ENCODE measurements at regions of chr14 and their contacts with region 1.

Region 1: DNA sequence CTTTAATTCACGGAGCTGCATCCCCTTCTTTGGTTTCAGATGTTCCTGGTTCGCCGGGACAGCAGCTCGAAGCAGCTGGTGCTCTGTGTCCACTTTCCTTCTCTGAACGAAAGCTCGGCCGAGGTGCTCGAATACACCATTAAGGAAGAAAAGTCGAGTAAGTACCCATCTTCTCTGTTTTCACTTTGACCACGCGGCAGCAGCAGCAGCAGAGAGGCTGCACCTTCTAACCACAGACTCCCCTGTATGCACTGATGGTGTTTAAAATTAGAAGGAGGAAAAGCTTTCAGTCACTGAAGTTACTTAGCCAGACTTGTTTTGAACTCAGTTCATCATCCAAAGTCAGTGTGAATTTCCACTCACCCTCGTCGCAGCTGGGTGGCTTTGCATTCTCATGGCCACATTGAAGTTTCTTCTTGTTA is 63.8 kb downstream of the RIN3 start:
- DNase-seq: peak; percentile 69
- ATAC-seq: peak; percentile 75
- H3K4me3 Mint-ChIP-seq: peak overlapping the region; percentile 66
- H3K27ac Mint-ChIP-seq: peak overlapping the region; percentile 85
- H3K4me1 Mint-ChIP-seq: peaks cover 79% of the 10 kb centered on the region
- H3K27me3 Mint-ChIP-seq: no peaks in the 10 kb centered on the region
- CTCF ChIP-seq: no peak

Region 2: GRCh38 chr14:92563359-92563758 is 14.0 kb before region 1 on chr14:
- CTCF ChIA-PET with region 1: interaction called, 13 read pairs
- POLR2A ChIA-PET with region 1: interaction called, 17 read pairs
- intact Hi-C with region 1: no loop called
- DNase-seq: peak; percentile 62
- ATAC-seq: peak; percentile 77
- H3K4me3 Mint-ChIP-seq: no peak overlapping the region
- H3K27ac Mint-ChIP-seq: peak overlapping the region; percentile 82
- H3K4me1 Mint-ChIP-seq: peaks cover 71% of the 10 kb centered on the region
- H3K27me3 Mint-ChIP-seq: no peaks in the 10 kb centered on the region
- CTCF ChIP-seq: no peak